ENCODE measurements at regions of chr11 and their contacts with region 1.

Region 1: DNA sequence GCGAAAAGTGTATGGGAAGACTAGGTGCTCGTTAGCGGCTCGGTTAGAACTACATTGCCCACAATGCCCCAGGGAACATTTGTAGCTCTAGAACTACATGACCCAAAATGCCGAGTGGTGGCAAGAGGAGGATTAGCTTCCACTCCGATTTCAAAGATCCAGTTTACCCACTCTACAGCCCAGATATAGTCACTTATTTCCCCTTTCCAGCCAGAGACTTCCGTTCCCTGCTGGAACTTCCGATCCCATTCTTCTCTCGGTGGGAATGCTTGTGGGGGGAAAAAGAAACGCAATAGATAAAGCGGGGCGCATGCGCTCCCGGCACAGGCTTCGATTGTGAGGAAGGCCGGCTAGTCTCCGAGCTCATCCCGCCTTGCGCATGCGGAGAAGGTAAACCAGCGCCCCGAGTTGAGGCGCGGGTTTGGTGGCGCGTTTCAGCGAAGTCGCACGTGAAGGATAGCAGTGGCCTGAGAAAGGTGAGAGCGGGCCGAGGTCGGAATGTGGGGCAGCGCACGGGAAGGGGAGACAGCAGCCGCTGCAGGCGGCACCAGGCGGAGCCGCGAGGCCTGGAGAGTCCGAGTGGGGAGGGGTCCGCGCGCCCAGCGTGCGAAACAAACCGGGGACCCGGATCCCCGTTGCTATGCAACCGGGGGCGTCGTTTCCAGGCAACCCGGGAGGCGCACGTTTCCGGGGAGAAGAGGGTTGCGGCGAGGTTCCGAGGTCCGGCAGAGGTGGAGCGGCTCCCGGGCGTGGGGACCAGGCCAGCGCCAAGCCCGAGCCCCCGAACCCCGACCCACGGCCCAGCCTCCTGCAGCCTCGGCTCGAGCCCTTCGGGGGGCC is at the start of gene TMEM109:
- DNase-seq: peak; percentile 80
- ATAC-seq: peak; percentile 54
- H3K4me3 Mint-ChIP-seq: peak within 1 kb of the TSS; percentile 98
- H3K27ac Mint-ChIP-seq: peak within 1 kb of the TSS; percentile 99
- H3K4me1 Mint-ChIP-seq: peaks cover 87% of the 10 kb centered on the region
- H3K27me3 Mint-ChIP-seq: no peaks in the 10 kb centered on the region
- CTCF ChIP-seq: no peak
- total RNA-seq, gene TMEM109: 117 and 121 TPM in 2 replicates

Region 2: DNA sequence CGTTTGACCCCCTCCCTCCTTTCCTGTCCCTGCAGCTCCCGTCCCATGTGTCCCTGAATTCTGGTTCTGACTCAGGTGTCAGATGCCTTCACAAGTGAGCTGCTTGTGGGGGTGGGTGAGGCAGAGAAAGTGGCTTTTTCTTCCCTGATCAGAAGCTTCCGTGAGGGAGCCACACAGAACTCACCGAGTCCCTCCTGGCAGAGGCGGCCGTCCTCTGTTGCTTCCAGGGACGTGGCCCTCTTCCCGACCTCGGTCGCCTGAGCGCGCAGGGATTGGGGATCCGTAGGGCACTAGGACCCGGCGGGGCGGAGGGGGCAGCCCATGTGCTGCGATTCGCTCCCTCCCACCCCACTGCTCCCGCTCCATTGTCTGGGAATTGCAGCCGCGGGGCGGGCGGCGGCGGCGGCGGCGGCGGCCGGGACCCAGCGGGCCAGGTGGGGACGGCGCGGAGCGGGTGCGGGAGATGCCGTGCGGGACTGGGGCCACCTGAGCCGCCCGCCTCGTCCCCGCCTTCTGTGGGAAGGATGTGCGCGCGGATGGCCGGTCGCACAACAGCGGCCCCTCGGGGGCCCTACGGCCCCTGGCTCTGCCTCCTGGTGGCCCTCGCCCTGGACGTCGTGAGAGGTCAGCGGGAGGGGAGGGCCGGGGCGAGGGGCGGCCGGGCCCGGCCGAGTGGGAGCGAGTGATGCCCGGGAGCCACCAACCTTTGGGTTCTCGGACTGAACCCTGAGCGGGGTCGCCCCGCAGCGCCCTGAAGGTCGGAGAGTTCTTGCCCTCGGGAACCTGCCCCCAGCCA is 10.3 kb after region 1 on chr11 and contains the start of gene TMEM132A:
- CTCF ChIA-PET with region 1: interaction called, 4 read pairs
- POLR2A ChIA-PET with region 1: interaction called, 191 read pairs
- intact Hi-C with region 1: no loop called
- DNase-seq: no peak
- ATAC-seq: peak; percentile 27
- H3K4me3 Mint-ChIP-seq: peak within 1 kb of the TSS; percentile 69
- H3K27ac Mint-ChIP-seq: no peak within 1 kb of the TSS
- H3K4me1 Mint-ChIP-seq: peaks cover 33% of the 10 kb centered on the region
- H3K27me3 Mint-ChIP-seq: peaks cover 4% of the 10 kb centered on the region
- CTCF ChIP-seq: no peak
- total RNA-seq, gene TMEM132A: 8.2 and 8.7 TPM in 2 replicates

Region 3: DNA sequence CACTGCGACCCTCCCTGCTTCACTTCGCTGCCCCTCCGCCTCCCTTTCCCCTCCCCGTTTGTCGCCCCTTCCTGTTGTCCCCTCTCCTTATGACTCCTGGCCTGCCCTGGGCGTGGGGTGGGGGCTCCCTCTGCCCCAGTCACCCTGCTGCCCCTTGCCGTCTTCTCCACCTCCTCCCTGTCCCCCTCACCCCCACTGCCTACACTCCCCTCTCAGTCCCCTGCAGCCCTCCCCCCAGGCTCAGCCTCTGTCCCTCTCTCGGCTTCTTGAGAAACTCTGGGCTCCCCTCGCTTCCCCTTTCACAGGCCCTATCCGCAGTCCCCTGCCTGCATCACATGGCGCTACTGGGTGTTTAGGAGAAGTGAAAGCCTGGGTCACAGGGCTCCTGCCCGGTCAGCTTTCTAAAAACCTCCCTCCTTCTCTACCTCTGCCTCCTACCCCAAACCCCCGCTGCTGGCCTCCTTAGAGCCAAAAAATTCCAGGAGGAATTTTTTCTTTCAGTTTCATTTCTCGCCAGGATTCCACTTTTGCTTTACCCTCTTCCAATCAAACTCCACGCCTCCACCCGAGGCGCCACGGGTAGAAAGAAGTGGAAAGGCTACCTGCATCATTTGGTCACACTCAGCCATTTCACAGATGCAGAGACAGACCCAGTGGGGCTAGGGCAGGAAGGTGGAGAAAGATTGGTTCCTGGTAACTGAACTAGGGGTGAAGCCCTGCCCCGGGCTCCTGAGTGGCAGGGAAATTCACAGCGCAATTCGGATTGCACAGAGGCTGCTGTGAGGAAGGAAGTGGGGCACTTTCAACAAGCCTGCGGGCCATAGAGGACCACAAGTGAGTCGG is 38.1 kb after region 1 on chr11 and contains the start of gene SLC15A3:
- CTCF ChIA-PET with region 1: interaction called, 13 read pairs
- POLR2A ChIA-PET with region 1: interaction called, 102 read pairs
- intact Hi-C with region 1: loop called (anchors 1 kb)
- DNase-seq: peak; percentile 62
- ATAC-seq: peak; percentile 88
- H3K4me3 Mint-ChIP-seq: peak within 1 kb of the TSS; percentile 91
- H3K27ac Mint-ChIP-seq: peak within 1 kb of the TSS; percentile 91
- H3K4me1 Mint-ChIP-seq: peaks cover 57% of the 10 kb centered on the region
- H3K27me3 Mint-ChIP-seq: no peaks in the 10 kb centered on the region
- CTCF ChIP-seq: no peak
- total RNA-seq, gene SLC15A3: 76.4 and 77.8 TPM in 2 replicates

Region 4: DNA sequence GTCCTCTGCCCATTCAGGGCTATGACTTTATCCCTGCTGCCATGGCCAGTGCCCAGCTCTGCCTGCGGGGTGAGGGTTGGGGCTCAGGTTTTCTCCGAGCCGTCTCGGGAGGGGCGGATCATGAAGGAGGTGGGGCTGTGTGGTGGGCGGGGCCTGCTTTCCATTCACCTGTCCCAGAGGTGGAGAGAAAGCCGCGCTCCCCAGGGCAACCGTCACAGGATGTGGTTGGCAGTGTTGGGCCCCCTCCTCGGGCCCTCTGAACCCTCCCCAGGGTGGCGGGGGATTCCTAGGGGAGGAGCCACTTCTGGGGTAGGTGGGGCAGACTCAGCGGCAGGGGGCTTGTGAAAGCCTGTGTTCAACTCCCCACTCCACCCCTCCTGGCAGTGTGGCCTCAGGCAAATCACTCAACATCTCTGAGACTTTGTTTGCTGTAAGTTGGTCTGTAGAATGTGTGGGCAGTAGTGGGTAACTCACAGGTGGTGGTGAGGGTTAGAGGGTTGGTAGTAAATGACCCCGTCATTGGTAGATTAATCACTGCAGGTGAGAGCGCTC is 107.7 kb after region 1 on chr11:
- CTCF ChIA-PET with region 1: no interaction called
- POLR2A ChIA-PET with region 1: no interaction called
- intact Hi-C with region 1: loop called (anchors 5 kb)
- DNase-seq: peak; percentile 62
- ATAC-seq: peak; percentile 86
- H3K4me3 Mint-ChIP-seq: peak overlapping the region; percentile 74
- H3K27ac Mint-ChIP-seq: peak overlapping the region; percentile 83
- H3K4me1 Mint-ChIP-seq: peaks cover 56% of the 10 kb centered on the region
- H3K27me3 Mint-ChIP-seq: no peaks in the 10 kb centered on the region
- CTCF ChIP-seq: no peak

Region 5: DNA sequence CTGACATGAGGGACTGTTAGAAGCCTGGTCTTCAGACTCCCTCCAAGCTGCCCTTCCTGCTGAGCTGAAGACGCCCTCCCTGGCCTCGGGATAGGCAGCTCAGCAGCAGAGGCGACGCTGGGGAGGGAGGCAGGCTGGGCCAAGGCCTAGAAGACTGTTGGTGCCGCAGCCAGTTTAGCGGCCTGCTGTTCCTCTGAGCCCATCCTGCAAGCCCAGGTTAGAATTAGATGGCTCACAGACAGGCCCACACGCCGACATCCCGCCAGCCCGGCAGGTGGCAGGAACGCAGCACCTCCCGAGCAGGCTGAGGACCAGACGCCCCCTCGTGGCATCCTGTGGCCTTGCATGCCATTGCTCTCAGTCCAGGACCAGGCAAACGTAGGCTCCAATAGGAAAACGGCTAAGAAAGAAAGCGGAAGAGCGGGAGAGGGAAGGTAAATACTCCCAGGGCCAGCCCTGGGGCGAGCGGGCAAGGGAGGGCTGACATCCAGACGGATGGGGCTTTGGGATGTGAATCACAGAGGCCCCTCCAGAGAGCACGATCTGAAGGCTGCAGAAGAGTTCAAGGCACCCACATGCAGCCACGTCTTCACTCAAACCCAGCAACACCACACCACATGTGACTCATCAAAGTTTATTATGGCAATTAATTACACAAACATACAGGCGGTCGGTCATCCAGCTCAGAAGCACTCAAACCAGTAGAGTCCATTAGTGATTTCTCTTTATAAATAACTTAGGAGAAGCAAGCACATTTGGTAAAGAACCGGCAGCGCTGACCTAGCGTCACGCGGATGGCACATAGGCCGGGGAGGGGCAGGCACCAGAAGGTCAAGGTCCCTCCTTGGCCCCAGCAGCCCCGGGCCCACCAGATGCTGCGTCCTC is 215.9 kb after region 1 on chr11:
- CTCF ChIA-PET with region 1: interaction called, 16 read pairs
- POLR2A ChIA-PET with region 1: interaction called, 4 read pairs
- intact Hi-C with region 1: loop called (anchors 1 kb)
- DNase-seq: peak; percentile 82
- ATAC-seq: peak; percentile 100
- H3K4me3 Mint-ChIP-seq: no peak overlapping the region
- H3K27ac Mint-ChIP-seq: peak overlapping the region; percentile 6
- H3K4me1 Mint-ChIP-seq: peaks cover 8% of the 10 kb centered on the region
- H3K27me3 Mint-ChIP-seq: no peaks in the 10 kb centered on the region
- CTCF ChIP-seq: peak; percentile 96

Region 6: DNA sequence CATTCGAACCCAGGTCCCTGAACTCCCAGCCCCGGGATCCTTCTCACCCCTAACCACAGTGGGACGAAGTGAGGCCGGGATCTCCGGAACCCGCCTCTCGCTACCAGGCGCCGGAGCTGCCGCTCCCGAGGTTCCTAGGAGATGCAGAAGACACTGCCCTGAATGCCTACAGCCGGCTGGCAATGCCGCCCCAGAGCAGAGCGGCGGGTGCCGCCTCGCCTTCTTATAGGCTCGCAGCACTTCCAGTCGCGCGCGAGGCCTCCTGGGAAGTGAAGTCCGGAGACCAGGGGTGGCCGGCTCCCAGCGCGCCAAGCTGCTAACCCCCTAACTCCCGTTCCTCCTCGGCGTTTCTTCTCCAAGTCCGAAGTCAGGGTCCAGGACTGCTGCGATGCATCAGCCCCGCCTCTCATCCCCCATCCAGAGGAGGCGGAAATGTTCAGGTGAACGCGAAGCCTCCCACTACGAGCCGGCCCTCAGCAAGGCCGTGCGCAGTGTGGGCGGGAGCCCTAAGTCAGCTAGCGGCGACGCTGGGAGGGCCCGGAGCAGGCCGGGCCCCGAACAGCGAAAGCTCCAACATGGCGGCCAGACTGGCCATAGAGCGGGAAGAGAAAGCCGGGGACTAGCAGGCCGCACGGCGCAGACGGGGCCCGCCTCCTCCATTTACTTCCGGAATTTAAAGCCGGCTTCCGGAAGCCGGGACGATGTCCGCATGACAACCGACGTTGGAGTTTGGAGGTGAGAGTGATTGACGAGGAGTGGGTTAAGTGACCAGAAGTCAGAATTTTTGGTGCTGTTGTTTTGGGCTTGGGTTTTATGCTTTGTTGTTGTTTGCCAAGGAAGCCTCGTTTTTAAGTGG is 447.9 kb after region 1 on chr11 and contains the starts of genes CYB561A3 and TMEM138:
- CTCF ChIA-PET with region 1: no interaction called
- POLR2A ChIA-PET with region 1: interaction called, 8 read pairs
- intact Hi-C with region 1: loop called (anchors 2 kb)
- DNase-seq: peak; percentile 84
- ATAC-seq: peak; percentile 76
- H3K4me3 Mint-ChIP-seq: peak within 1 kb of the TSS; percentile 100
- H3K27ac Mint-ChIP-seq: peak within 1 kb of the TSS; percentile 98
- H3K4me1 Mint-ChIP-seq: peaks cover 59% of the 10 kb centered on the region
- H3K27me3 Mint-ChIP-seq: no peaks in the 10 kb centered on the region
- CTCF ChIP-seq: no peak
- total RNA-seq, gene CYB561A3: 397 and 433 TPM in 2 replicates
- total RNA-seq, gene TMEM138: 69.7 and 81.2 TPM in 2 replicates

Measured in activated B cell treated with CpG ODN at 0.5 μM for 24 hours (primary cell).